Activated CD8-positive, alpha-beta memory T cell treated with anti-CD3 and anti-CD28 coated beads, Interleukin-2, amount 10 ng/mL, durations not matched to agents 7 days and 5 days (primary cell): ENCODE measurements at regions of chr16 and their contacts with region 1.

Region 1: GRCh38 chr16:10876799-10877341 is at the start of gene CIITA:
- DNase-seq: peak; percentile 91
- ATAC-seq: peak; percentile 64
- H3K4me3 Mint-ChIP-seq: peak within 1 kb of the TSS; percentile 90
- H3K27ac Mint-ChIP-seq: peak within 1 kb of the TSS; percentile 92
- H3K4me1 Mint-ChIP-seq: peaks cover 74% of the 10 kb centered on the region
- H3K27me3 Mint-ChIP-seq: no peaks in the 10 kb centered on the region
- total RNA-seq, gene CIITA: 68.7 to 103 TPM

Region 2: DNA sequence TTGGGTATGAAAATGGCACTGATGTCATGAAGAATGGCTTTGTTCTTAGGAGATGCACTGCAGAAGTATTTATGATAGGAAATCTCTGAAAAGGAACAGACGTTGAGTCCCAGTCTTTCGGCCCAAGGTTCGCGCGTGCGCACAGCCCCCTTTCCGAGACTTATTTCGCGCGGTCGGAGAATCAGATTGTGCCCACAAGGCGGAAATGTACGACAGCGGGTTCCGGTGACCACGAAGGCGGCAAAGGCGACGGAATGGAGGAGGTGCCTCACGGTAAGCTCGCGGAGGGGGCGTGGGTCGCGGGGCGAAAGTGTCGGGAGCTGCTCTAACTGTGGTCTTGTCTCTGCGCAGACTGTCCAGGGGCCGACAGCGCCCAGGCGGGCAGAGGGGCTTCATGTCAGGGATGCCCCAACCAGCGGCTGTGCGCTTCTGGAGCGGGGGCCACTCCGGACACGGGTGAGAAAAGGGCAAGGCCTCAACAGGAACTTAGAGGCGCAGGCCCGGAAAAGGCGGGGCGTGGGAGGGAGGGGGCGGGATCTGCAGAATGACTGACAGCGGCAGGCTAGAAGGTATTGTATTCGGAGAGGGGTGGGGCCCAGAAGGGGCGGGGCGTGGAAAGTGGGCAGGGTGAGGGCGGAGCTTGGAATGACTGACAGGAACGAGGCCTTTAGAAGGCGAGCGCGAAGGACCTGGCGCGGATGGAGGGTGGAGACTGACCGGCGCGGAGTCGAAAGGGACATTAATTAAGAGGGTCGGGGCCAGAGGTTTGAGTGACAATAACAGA is 133.1 kb before region 1 on chr16 and contains the start of gene NUBP1:
- CTCF ChIA-PET with region 1: interaction called, 52 read pairs
- DNase-seq: peak; percentile 100
- ATAC-seq: peak; percentile 91
- H3K4me3 Mint-ChIP-seq: peak within 1 kb of the TSS; percentile 85
- H3K27ac Mint-ChIP-seq: peak within 1 kb of the TSS; percentile 98
- H3K4me1 Mint-ChIP-seq: peaks cover 64% of the 10 kb centered on the region
- H3K27me3 Mint-ChIP-seq: no peaks in the 10 kb centered on the region
- total RNA-seq, gene NUBP1: 27.8 to 35.3 TPM

Region 3: DNA sequence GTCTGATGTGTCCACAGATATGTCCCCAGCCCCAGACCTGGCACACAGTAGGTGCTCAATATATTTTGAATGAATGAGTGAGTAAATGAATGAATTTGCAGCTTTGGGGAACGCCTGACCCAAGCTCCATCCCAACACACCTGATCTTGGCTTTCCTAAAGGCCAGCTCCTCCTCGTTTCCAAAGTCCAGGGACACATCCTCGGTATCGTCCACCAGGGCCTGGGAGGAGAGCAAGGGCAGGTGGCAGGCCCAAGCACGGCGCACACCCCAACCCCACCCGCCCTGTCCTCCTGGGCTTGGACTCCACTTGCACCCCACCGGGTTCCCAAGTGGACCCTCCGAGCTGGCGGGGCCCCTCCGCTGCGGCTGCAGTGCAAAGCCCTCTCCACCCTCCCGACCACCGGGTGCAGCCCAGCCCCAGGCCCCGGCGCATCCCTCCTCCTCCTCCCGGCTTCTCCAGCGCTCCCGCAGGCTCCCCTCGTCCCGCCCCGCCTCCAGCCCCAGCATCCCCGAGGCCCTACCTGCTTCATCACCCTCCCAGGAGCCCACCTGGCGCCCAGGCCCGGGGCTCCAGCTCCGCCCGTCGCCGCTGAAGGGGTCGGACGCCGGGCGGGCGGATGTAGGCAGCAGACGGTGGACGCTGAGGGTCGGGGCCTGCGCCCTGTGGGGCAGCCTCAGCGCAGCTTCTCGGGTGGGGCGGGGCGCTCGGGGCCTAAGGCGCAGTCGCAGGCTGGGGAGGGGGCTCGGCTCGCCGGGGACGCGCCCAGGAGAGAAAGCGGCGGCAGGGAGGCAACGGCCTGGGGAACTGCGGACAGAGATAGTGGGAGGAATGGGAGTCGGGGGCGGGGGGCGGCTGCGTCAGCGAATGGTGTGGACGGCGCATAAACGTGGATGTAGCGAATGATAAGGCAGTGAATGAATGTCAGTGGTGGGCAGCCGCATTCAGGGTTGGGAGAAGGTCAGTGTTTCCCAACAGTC is 58.6 kb before region 1 on chr16 and contains the start of gene TVP23A:
- CTCF ChIA-PET with region 1: no interaction called
- DNase-seq: no peak
- ATAC-seq: no peak
- H3K4me3 Mint-ChIP-seq: no peak within 1 kb of the TSS
- H3K27ac Mint-ChIP-seq: no peak within 1 kb of the TSS
- H3K4me1 Mint-ChIP-seq: peaks cover 8% of the 10 kb centered on the region
- H3K27me3 Mint-ChIP-seq: no peaks in the 10 kb centered on the region
- total RNA-seq, gene TVP23A: not detected

Region 4: GRCh38 chr16:10862432-10862831 is 14.4 kb before region 1 on chr16:
- CTCF ChIA-PET with region 1: interaction called, 11 read pairs
- DNase-seq: no peak
- ATAC-seq: no peak
- H3K4me3 Mint-ChIP-seq: no peak overlapping the region
- H3K27ac Mint-ChIP-seq: no peak overlapping the region
- H3K4me1 Mint-ChIP-seq: peaks cover 14% of the 10 kb centered on the region
- H3K27me3 Mint-ChIP-seq: peaks cover 31% of the 10 kb centered on the region

Region 5: GRCh38 chr16:10918294-10919002 is 41.6 kb after region 1 on chr16:
- CTCF ChIA-PET with region 1: interaction called, 34 read pairs
- DNase-seq: peak; percentile 91
- ATAC-seq: peak; percentile 72
- H3K4me3 Mint-ChIP-seq: no peak overlapping the region
- H3K27ac Mint-ChIP-seq: peak overlapping the region; percentile 42
- H3K4me1 Mint-ChIP-seq: peaks cover 12% of the 10 kb centered on the region
- H3K27me3 Mint-ChIP-seq: no peaks in the 10 kb centered on the region

Region 6: DNA sequence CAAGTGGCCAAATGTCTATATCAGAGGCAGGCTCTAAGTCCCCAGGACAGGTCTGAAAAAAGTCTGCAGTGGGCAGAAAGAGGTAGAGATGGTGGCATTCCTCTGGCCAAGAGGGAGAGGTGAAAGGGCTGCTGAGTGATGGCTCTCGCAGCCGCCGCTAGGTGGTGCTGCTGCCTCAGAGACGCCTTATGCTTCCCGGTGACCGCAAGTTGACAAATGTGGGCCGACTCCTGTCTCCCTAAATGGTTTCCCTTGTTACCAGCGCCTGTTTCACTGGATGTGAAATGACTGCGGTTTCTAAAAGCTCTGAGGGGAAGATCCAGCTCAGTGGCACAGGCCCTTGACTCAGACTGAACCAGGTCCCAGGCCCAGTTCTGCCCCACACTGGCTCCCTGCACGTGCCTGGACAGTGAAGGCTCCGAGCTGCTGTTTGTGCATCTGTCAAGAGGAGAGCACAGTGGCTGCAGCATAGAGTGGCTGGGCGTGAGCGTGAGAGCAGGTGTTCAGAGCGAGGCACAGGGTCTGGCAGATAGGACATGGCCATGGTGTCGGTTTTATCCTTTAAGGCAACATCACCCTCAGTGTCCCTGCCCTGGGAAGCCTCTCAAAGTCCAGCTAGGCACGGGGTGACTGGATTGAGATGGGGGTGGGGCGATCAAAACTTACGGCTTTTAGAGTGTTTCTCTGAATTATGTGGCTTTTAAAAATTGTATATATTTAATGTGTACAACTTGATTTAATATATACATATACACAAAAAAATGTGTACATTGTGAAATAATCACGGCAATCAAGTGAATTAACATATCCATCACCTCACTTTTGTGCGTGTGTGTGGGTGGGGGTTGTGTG is 87.4 kb after region 1 on chr16:
- CTCF ChIA-PET with region 1: no interaction called
- DNase-seq: peak; percentile 89
- ATAC-seq: peak; percentile 63
- H3K4me3 Mint-ChIP-seq: peak overlapping the region; percentile 53
- H3K27ac Mint-ChIP-seq: peak overlapping the region; percentile 91
- H3K4me1 Mint-ChIP-seq: peaks cover 80% of the 10 kb centered on the region
- H3K27me3 Mint-ChIP-seq: no peaks in the 10 kb centered on the region